ENCODE measurements at regions of chr9 and their contacts with region 1.

Region 1: DNA sequence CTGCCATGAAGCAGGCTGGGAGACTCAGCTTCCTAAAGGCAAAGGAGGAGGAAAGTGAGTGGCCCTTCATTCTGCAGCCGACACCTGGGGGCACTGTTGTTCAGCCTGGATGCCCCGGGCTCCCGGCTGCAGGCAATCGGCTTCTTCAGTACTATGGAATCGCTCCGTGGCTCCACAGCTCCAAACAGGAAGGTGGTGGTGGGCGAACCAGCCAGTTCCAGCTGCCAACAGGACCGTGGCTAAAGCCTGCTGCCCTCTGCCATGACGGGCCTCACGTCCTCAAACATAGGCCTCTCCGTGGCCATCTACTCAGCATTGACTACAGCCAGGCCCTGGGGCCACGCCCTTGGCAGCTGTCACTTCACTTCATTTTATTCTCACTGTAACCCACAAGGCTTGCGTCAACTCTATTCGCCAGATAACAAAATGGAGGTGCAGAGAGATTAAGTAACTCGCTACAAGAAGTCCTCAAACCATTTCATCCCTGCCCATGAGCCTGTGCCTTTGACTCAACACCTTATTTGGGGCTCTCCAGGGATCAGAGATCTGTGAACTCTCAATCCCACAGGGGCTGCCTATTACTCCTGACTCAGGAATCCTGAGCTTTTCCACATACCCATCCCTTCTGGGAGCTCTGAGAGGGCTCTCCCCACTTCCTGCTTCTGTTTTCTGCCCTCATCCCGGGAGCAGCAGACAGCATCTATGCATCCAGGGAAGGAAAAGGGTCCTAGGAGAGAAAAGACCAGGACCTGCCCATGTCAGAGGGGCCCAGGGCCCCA is 38.0 kb downstream of the PAX5 start:
- DNase-seq: peak; percentile 69
- H3K4me3 Mint-ChIP-seq: no peak overlapping the region
- H3K27ac Mint-ChIP-seq: no peak overlapping the region
- H3K4me1 Mint-ChIP-seq: peaks cover 2% of the 10 kb centered on the region
- H3K27me3 Mint-ChIP-seq: peaks cover 23% of the 10 kb centered on the region

Region 2: GRCh38 chr9:37309136-37309535 is 313.0 kb after region 1 on chr9:
- CTCF ChIA-PET with region 1: interaction called, 5 read pairs
- POLR2A ChIA-PET with region 1: no interaction called
- intact Hi-C with region 1: loop called (anchors 1 kb)
- DNase-seq: peak; percentile 40
- H3K4me3 Mint-ChIP-seq: no peak overlapping the region
- H3K27ac Mint-ChIP-seq: no peak overlapping the region
- H3K4me1 Mint-ChIP-seq: peaks cover 3% of the 10 kb centered on the region
- H3K27me3 Mint-ChIP-seq: no peaks in the 10 kb centered on the region

Region 3: GRCh38 chr9:37329576-37329975 is 333.5 kb after region 1 on chr9:
- CTCF ChIA-PET with region 1: interaction called, 12 read pairs
- POLR2A ChIA-PET with region 1: no interaction called
- intact Hi-C with region 1: loop called (anchors 10 kb)
- DNase-seq: no peak
- H3K4me3 Mint-ChIP-seq: no peak overlapping the region
- H3K27ac Mint-ChIP-seq: no peak overlapping the region
- H3K4me1 Mint-ChIP-seq: no peaks in the 10 kb centered on the region
- H3K27me3 Mint-ChIP-seq: no peaks in the 10 kb centered on the region

Region 4: GRCh38 chr9:37364751-37365360 is 368.7 kb after region 1 on chr9:
- CTCF ChIA-PET with region 1: interaction called, 11 read pairs
- POLR2A ChIA-PET with region 1: interaction called, 3 read pairs
- intact Hi-C with region 1: loop called (anchors 1 kb)
- DNase-seq: peak; percentile 46
- H3K4me3 Mint-ChIP-seq: no peak overlapping the region
- H3K27ac Mint-ChIP-seq: no peak overlapping the region
- H3K4me1 Mint-ChIP-seq: no peaks in the 10 kb centered on the region
- H3K27me3 Mint-ChIP-seq: no peaks in the 10 kb centered on the region

Region 5: GRCh38 chr9:37390759-37391158 is 394.6 kb after region 1 on chr9:
- CTCF ChIA-PET with region 1: interaction called, 7 read pairs
- POLR2A ChIA-PET with region 1: no interaction called
- intact Hi-C with region 1: loop called (anchors 1 kb)
- DNase-seq: peak; percentile 62
- H3K4me3 Mint-ChIP-seq: no peak overlapping the region
- H3K27ac Mint-ChIP-seq: no peak overlapping the region
- H3K4me1 Mint-ChIP-seq: peaks cover 2% of the 10 kb centered on the region
- H3K27me3 Mint-ChIP-seq: no peaks in the 10 kb centered on the region